ENCODE measurements at regions of chr2 and their contacts with region 1.

Region 1: GRCh38 chr2:64865073-64865830 is 123.9 kb upstream of the SLC1A4 start:
- DNase-seq: peak; percentile 75 to 86
- H3K4me3 ChIP-seq: peak overlapping the region; percentile 59 to 71 (median 66)
- H3K27ac ChIP-seq: peak overlapping the region; percentile 77 to 89 (median 87)
- H3K4me1 ChIP-seq: peaks cover 11 to 34% (median 26%) of the 10 kb centered on the region in 4 donors
- H3K27me3 ChIP-seq: peaks cover 0 to 7% (median 0%) of the 10 kb centered on the region in 3 donors
- CTCF ChIP-seq: peak in 4 of 7 experiments; percentile 12 to 99 (median 78)
- EP300 ChIP-seq: no peak
- POLR2A ChIP-seq: no peak

Region 2: GRCh38 chr2:64036034-64036705 is 829.1 kb before region 1 on chr2:
- intact Hi-C with region 1: no loop called
- DNase-seq: peak in 1 of 2 donors; percentile 34
- H3K4me3 ChIP-seq: no peak overlapping the region
- H3K27ac ChIP-seq: no peak overlapping the region
- H3K4me1 ChIP-seq: no peaks in the 10 kb centered on the region
- H3K27me3 ChIP-seq: no peaks in the 10 kb centered on the region
- CTCF ChIP-seq: no peak
- EP300 ChIP-seq: no peak
- POLR2A ChIP-seq: no peak

Region 3: GRCh38 chr2:64482765-64483504 is 382.3 kb before region 1 on chr2:
- intact Hi-C with region 1: no loop called
- DNase-seq: peak; percentile 44 to 59
- H3K4me3 ChIP-seq: no peak overlapping the region
- H3K27ac ChIP-seq: no peak overlapping the region
- H3K4me1 ChIP-seq: peaks cover 0 to 4% (median 0%) of the 10 kb centered on the region in 4 donors
- H3K27me3 ChIP-seq: peaks cover 0 to 5% (median 0%) of the 10 kb centered on the region in 3 donors
- CTCF ChIP-seq: no peak
- EP300 ChIP-seq: no peak
- POLR2A ChIP-seq: no peak

Region 4: DNA sequence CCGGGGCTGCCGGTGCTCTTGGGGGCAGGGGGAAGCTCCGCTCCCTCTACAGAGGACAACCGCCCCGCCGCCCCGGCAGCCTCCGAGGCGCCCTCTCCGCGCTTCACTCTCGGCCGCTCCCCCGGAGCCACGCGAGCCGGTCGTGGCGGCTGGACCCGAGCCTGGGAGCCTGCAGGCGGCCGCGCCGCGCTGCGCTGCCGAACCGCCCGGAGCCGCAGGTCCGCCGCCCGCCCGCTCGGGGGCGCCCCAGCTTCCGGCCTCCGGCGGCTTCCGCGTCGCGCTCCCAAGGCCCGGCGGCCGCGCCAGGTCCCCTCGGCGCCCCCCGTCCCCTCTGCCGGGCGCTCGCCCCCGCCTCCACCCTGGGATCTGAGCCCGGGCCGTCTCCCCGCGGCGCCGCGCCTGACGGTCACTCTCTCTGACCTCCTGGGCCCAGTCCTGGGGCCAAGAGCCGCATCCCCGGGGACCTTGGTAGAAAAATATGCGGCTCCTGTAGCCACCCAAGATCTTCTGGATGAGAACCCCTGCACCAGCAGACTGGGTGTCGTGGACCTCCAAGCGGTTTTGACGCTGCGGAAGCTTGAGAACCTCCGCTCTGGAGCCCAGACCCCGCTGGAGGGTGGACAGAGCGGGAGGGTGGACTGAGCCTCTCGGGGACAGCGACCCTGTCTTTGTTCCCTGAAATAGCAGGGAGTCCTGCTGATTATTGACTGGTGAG is 255.9 kb before region 1 on chr2:
- intact Hi-C with region 1: loop called (anchors 10 kb)
- DNase-seq: peak; percentile 70 to 89
- H3K4me3 ChIP-seq: peak overlapping the region; percentile 58 to 60 (median 58)
- H3K27ac ChIP-seq: peak overlapping the region; percentile 61 to 88 (median 78)
- H3K4me1 ChIP-seq: peaks cover 10 to 50% (median 38%) of the 10 kb centered on the region in 4 donors
- H3K27me3 ChIP-seq: no peaks in the 10 kb centered on the region
- CTCF ChIP-seq: peak in 2 of 7 experiments; percentile 19 to 69
- EP300 ChIP-seq: no peak
- POLR2A ChIP-seq: no peak

Region 5: GRCh38 chr2:64685438-64685837 is 179.8 kb before region 1 on chr2:
- intact Hi-C with region 1: no loop called
- DNase-seq: no peak
- H3K4me3 ChIP-seq: no peak overlapping the region
- H3K27ac ChIP-seq: no peak overlapping the region
- H3K4me1 ChIP-seq: peaks cover 0 to 3% (median 0%) of the 10 kb centered on the region in 4 donors
- H3K27me3 ChIP-seq: no peaks in the 10 kb centered on the region
- CTCF ChIP-seq: no peak
- EP300 ChIP-seq: no peak
- POLR2A ChIP-seq: no peak

Region 6: DNA sequence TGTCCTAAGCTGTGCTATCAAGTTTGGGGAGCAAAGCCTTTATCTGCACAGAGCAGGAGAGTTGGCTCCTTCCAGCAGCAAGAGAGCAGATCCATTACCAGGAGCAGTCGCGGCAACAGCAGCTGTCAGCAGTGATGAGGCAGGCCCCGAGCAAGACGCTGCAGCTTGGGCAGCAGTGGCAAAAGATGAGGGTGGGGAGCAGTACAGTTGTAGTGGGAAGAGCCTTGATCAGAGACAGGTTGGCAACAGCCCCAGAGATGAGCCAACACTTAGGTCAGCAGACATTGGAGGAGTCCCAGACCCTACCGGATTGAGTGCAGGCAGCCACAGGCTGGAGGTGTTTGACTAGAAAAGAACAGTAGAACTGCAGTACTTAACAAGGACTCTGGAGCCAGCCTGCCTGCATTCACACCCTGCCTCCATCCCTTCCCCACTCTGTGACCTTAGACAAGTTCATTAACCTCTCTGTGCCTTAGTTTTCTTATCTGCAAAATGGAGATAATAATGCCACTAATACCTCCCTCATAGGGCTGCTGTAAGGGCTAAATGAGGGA is 94.4 kb before region 1 on chr2:
- intact Hi-C with region 1: loop called (anchors 10 kb)
- DNase-seq: peak in 1 of 2 donors; percentile 66
- H3K4me3 ChIP-seq: no peak overlapping the region
- H3K27ac ChIP-seq: no peak overlapping the region
- H3K4me1 ChIP-seq: peaks cover 15 to 39% (median 26%) of the 10 kb centered on the region in 4 donors
- H3K27me3 ChIP-seq: no peaks in the 10 kb centered on the region
- CTCF ChIP-seq: no peak
- EP300 ChIP-seq: no peak
- POLR2A ChIP-seq: no peak

Measured in stomach (tissue), 19 donors.